Left ventricle myocardium superior (tissue), 1 donor: ENCODE measurements at regions of chr20 and their contacts with region 1.

Region 1: DNA sequence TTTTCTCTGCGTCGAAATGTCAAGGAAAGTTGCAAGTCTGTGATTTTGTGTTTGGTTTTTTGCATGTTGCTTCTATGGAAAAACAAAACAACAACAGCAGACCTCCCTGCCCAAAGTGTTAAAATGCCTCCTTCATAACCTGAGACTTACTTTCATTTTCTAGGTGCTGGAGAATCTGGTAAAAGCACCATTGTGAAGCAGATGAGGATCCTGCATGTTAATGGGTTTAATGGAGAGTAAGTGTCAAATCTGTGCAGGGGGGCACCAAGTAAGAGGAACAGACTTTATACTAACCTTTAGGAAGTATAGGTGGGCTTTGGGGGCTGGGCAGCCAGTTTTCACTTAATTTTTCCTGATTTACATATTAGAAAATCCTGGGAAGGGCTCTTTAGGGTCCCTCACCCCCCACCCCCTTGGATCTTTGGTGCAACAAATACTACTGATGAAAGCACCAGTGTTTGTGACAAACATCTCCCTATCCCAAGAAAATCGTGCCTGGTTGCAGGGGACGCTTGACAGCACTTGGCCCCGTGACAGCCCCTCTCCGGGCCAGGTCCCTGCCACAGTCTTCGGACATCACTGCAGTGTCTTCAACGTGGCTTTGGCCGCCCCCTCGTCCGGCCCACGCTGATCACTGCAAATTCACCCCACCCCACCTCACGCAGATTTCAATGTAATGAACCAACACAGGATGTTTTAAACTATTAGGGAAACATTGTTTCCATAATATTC is 43.1 kb downstream of the GNAS start:
- DNase-seq: peak; percentile 47
- ATAC-seq: no peak

Region 2: GRCh38 chr20:58850693-58851174 is 44.9 kb before region 1 on chr20 and contains the start of gene GNAS-AS1:
- intact Hi-C with region 1: no loop called
- DNase-seq: peak; percentile 90
- ATAC-seq: peak; percentile 91
- total RNA-seq, gene GNAS-AS1: 0.35 TPM

Region 3: DNA sequence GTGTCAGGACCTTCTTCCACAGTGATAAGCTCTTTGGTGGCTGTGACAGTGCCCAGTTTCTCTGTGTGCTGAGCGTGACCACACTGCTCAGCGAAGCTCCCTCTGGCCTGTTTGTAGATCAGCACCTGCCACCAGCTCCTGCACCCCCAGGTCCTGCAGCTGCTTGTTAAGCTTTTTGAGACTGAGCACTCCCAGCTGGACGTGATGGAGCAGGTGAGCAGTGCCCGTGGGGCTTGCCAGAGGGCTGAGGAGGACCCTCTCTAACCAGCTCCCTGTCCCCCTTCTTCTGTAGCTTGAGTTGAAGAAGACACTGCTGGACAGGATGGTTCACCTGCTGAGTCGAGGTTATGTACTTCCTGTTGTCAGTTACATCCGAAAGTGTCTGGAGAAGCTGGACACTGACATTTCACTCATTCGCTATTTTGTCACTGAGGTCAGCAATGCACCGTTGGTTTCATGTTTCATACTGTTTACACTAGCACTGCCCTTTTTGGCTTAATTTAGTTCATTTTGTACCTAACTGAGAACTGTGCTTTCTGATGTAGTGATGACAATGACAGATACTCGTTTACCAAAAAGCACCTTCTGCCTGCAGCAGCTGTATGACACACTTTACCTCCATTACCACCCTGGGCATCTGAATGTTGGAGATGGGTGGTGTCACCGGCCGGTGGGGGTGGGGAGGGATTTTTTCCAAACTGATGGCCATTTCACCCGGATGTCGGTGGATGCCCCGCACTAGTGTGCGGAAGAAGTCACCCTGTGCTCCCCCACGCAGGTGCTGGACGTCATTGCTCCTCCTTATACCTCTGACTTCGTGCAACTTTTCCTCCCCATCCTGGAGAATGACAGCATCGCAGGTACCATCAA is 98.0 kb after region 1 on chr20:
- intact Hi-C with region 1: loop called (anchors 5 kb)
- DNase-seq: no peak
- ATAC-seq: no peak